Lower leg skin (tissue), 4 donors: ENCODE measurements at regions of chr16 and their contacts with region 1.

Region 1: DNA sequence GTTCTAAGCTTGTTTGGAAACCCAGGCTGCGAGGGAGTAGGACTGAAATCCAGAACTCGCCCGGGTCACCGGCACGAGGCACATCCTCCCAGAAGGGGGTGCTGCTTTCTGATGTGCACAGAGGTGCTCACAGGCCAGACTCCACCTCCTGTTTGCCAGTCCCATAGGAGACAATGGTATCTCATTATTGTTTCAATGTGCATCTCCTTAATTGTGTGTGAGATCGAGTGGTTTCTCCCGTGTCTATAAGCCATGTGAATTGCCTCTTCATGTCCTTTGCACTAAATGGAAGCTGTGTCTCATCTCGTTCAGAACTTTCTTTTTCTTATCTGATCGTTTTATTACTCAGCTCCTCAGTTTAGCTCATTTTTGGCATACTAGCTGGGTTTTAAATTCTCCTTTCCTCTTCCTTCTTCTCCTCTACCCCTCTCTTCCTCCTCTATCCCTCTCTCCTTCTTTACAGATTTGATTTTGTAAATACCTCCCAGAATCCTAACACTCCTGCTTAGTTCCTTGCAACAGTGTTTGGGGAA is 32.1 kb upstream of the PRKCB start:
- DNase-seq: peak in 1 of 2 donors; percentile 28
- H3K4me3 ChIP-seq: no peak overlapping the region
- CTCF ChIP-seq: no peak
- POLR2A ChIP-seq: no peak

Region 2: GRCh38 chr16:23754594-23755483 is 48.8 kb before region 1 on chr16 and contains the start of gene CHP2:
- intact Hi-C with region 1: loop called (anchors 10 kb)
- DNase-seq: peak in 1 of 2 donors; percentile 84
- H3K4me3 ChIP-seq: peak within 1 kb of the TSS; percentile 6
- CTCF ChIP-seq: no peak
- POLR2A ChIP-seq: no peak
- total RNA-seq, gene CHP2: 120 to 176 (median 134) TPM

Region 3: DNA sequence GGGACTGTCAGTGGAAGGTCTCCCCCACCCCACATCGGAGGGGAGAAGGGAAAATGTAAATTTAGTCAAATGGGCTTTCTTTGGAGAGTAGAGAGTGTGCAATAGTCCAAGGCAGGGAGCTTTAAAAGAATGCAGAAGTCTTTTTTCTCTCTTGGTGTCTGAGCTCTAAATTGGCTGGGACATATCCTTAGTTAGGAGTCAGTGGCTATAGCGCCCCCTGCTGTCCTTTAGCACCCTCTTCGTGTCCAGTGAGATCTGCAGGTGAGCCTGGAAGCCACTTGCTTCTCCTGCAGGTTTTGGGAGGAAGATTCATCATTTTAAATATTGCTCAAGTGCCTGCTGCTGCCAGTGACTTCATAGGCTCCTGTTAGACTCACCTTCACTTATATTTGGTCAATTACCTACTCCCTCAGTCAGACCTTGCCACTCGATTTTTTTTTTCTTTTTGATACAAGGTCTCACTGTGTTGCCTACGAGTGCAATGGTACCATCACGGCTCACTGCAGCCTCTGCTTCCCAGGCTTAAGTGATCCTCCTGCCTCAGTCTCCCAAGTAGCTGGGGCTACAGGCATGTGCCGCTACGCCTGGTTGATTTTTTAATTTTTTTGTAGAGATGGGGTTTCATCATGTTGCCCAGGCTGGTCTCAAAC is 206.9 kb after region 1 on chr16:
- intact Hi-C with region 1: loop called (anchors 5 kb)
- DNase-seq: peak; percentile 71 to 91
- H3K4me3 ChIP-seq: no peak overlapping the region
- CTCF ChIP-seq: no peak
- POLR2A ChIP-seq: no peak

Region 4: DNA sequence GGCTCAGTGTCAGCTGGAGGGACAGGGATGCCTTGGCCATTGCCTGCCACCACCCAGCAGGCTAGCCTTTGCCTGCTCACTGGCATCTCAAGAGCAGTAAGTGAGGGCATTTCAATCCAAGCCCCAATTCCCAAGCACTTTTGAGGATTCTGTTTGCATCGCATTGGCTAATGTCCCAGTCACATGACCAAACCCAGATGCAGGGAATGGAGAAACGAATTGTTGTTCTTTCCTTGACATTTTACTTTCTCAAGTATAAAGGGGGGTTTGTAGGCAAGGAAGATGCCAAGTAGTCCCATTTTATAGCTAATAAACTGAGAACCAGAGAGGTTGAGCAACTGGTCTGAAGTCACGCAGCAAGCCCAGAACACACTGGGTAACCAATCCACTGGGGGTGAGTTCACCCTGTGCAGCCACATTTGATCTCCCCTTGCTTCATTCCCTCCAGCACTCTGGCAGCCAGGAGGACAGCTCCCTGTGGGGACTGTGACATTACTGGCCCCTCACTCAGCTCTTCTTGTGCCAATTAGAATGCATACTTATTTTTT is 258.7 kb after region 1 on chr16:
- intact Hi-C with region 1: no loop called
- DNase-seq: peak in 1 of 2 donors; percentile 42
- H3K4me3 ChIP-seq: no peak overlapping the region
- CTCF ChIP-seq: no peak
- POLR2A ChIP-seq: no peak